Pancreas (tissue), 10 donors: ENCODE measurements at regions of chr22 and their contacts with region 1.

Region 1: GRCh38 chr22:43273902-43274484 is 69.2 kb downstream of the SCUBE1 start:
- DNase-seq: peak in 4 of 6 donors; percentile 22 to 62 (median 32)
- ATAC-seq: peak; percentile 67 to 96 (median 90)
- H3K4me3 ChIP-seq: no peak overlapping the region
- H3K27ac ChIP-seq: no peak overlapping the region
- H3K4me1 ChIP-seq: no peaks in the 10 kb centered on the region
- H3K27me3 ChIP-seq: no peaks in the 10 kb centered on the region
- CTCF ChIP-seq: peak; percentile 36 to 48 (median 46)

Region 2: DNA sequence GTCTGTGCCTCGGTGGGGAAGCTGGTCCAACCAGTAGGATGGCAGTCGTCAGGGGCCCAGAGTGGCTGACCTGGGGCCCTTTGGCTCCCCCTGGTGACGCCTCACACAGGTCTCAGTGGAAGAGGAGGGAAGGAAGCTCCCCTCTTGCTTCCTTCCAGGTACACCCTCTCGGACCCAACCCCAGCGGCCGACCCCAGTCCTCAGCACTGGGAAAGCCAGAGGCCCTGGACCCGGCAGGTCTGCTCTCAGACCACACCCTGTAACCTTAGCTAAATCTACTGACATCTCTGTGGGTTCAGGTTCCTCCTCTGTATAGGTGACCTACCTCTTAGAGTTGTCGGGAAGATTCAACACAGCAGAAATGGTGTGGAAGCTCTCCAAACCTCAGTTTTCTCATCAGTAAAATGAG is 72.5 kb after region 1 on chr22:
- intact Hi-C with region 1: loop called in 1 of 3 experiments (anchors 10 kb)
- DNase-seq: peak; percentile 23 to 79 (median 48)
- ATAC-seq: peak in 3 of 4 donors; percentile 66 to 76 (median 73)
- H3K4me3 ChIP-seq: no peak overlapping the region
- H3K27ac ChIP-seq: no peak overlapping the region
- H3K4me1 ChIP-seq: peaks cover 0 to 4% (median 0%) of the 10 kb centered on the region in 3 donors
- H3K27me3 ChIP-seq: peaks cover 0 to 7% (median 3%) of the 10 kb centered on the region in 4 donors
- CTCF ChIP-seq: peak; percentile 31 to 56 (median 44)

Region 3: DNA sequence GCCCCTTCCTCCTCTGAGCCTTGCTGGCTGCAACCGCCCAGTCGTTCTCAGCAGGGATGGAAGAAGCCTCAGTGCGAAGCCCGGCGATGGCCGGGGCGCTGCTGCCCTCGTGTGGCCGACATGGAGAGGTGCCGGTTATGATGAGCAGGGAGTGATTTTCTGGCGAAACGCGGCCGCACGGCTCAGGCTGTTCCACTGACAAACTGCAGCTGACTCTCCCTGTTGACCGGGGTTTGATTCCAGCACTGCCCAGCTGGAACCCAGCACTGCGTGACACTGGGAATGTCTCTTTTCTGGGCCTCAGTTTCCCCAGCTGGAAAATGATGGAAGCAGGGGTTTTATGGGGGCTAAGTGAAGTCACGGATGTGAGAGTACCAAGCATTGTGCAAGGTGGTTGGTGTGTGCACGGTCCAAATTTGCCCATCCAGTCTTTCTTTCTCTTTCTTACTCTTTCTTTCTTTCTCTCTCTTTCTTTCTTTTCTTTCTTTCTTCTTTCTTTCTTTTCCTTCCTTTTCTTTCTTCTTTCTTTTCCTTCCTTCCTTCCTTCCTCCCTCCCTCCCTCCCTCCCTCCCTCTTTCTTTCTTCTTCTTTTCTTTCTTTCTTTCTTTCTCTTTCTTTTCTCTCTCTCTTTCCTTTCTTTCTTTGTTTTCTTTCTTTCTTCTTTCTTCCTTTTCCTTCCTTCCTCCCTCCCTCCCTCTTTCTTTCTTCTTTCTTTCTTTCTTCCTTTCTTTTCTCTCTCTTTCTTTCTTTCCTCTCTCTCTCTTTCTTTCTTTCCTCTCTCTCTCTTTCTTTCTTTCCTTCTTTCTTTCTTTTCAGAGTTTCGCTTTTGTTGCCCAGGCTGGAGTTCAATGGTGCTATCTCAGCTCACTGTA is 112.0 kb after region 1 on chr22:
- intact Hi-C with region 1: loop called (anchors 5 to 10 kb)
- DNase-seq: peak; percentile 63 to 94 (median 82)
- ATAC-seq: peak; percentile 92 to 97 (median 96)
- H3K4me3 ChIP-seq: no peak overlapping the region
- H3K27ac ChIP-seq: no peak overlapping the region
- H3K4me1 ChIP-seq: no peaks in the 10 kb centered on the region
- H3K27me3 ChIP-seq: peaks cover 0 to 4% (median 0%) of the 10 kb centered on the region in 4 donors
- CTCF ChIP-seq: peak; percentile 73 to 92 (median 84)

Region 4: DNA sequence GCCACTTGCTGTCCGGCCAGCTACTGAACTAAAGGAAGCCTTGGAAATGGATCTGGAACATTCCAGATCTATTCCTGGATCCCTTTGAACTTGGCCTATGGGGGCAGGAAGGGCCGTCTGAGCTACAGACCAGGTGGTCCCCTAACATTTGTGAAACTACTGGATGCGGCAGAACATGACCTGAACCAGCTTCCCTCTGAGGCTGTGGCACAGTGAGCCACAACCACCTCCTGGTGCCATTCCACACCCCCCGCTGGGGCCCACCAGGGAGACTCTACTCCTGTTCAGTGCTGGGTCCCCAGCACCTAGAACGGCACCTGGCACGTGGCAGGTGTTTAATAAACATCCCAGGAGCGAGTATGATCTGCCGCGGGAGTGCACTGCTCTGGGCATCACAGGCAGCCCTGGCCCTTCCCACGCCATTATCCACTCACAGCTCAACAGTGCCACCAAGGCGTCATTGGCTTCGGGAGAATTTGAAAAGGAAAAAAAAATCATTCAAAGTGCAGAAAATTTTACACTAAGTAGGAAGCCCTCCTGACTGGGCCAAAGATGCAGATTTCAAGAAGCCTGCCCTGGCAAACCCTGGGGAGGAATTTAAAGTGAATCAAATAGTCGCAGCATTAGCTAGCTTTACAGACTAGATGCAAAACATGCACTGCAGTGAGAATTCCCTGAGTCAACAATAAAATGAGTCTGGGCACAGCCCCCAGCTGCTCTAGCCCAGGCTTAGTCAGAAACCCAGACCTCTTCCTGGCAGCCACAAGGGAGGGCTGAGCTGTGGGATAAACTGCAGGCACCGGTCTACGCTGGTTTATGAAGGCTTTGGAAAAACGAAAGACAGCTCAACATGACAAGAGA is 552.4 kb after region 1 on chr22:
- intact Hi-C with region 1: loop called in 1 of 3 experiments (anchors 10 kb)
- DNase-seq: peak in 5 of 6 donors; percentile 29 to 69 (median 44)
- ATAC-seq: peak in 3 of 4 donors; percentile 59 to 61 (median 60)
- H3K4me3 ChIP-seq: no peak overlapping the region
- H3K27ac ChIP-seq: no peak overlapping the region
- H3K4me1 ChIP-seq: peaks cover 6 to 15% (median 12%) of the 10 kb centered on the region in 3 donors
- H3K27me3 ChIP-seq: no peaks in the 10 kb centered on the region
- CTCF ChIP-seq: peak in 3 of 4 donors; percentile 15 to 19 (median 17)